PC-3 (cell line): ENCODE measurements at regions of chr19 and their contacts with region 1.

Region 1: DNA sequence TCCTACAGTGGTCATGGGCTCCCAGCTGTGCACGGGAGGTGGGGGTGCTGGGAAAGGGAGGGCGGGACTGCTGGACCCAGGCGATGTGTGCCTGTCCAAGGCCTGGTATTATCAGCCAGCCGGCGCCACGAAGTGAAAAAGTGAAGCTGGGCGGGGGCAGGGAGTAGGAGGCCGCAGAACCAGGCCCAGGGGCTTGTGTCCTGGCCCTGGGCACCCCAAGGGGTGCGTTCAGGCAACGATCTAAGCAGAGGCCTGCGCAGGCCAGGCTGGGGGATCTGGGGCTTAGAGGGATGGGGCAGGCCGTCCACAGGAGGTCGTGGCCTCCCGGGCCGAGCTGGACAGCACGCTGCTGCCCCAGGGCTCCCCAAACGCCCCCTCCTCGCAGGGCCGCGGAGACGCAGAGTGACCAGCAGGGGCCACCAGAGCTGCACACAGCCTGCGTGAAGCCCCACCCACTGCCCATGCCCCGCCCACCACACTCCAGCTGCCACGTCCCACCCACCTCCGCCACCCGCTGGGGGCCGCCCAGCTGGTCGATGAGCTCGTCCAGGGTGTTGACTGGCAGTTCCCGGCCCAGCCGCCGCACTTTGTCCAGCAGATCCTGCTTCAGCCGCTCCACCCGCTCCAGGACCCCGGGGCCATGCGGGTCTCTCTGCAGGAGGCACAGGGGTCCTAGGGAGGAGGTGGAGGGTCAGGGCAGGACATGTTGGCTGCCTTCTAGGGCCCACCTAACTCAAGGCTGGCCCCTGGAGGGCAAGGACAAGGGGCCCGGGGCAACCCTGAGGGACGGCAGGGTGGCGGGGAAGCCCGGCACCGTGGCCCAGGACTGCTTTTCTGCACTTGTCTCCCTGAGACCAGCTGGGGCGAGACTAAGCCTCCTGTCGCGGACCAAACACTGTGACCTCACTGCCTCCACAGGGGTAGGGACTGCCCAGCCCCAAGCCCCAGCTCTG is 9.5 kb downstream of the GPX4 start:
- DNase-seq: peak; percentile 66
- ATAC-seq: peak; percentile 72
- H3K4me3 ChIP-seq: no peak overlapping the region
- H3K27ac ChIP-seq: no peak overlapping the region
- H3K4me1 ChIP-seq: no peaks in the 10 kb centered on the region
- H3K27me3 ChIP-seq: no peaks in the 10 kb centered on the region
- CTCF ChIP-seq: peak; percentile 66

Region 2: DNA sequence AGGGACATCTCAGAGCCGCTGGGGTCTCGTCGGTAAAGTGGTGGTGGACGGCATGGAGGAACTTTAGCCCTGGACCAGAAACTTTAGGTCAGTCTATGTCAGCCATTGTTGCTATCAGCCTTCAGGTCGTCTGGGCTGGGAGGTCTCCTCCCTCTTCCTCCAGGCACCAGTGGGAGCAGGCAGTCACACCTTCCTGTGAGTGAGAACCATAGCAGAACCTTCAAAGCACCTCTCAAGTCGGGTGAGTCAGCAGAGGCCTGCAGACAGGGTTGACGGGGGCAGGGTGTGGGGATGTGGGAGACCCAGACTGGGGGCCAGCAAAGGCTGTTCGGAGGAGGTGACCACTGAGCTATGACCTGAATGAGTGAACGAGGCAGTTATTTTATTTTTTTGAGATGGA is 76.1 kb after region 1 on chr19:
- CTCF ChIA-PET with region 1: no interaction called
- POLR2A ChIA-PET with region 1: no interaction called
- intact Hi-C with region 1: loop called (anchors 5 kb)
- DNase-seq: peak; percentile 37
- ATAC-seq: peak; percentile 73
- H3K4me3 ChIP-seq: no peak overlapping the region
- H3K27ac ChIP-seq: 0 out of 2 replicates have a peak overlapping the region, but pooled peaks have one; percentile 12
- H3K4me1 ChIP-seq: peaks cover 7% of the 10 kb centered on the region
- H3K27me3 ChIP-seq: no peaks in the 10 kb centered on the region
- CTCF ChIP-seq: no peak